ENCODE measurements at regions of chr2 and their contacts with region 1.

Region 1: GRCh38 chr2:164737612-164738081 is 104.0 kb downstream of the COBLL1 start:
- DNase-seq: peak; percentile 52
- ATAC-seq: peak; percentile 83
- H3K4me3 ChIP-seq: no peak overlapping the region
- H3K27ac ChIP-seq: no peak overlapping the region
- H3K4me1 ChIP-seq: peaks cover 2% of the 10 kb centered on the region
- H3K27me3 ChIP-seq: no peaks in the 10 kb centered on the region; the same call in none of the 2 replicates
- CTCF ChIP-seq: peak; percentile 75
- POLR2A ChIP-seq: no peak
- RAD21 ChIP-seq: peak; percentile 78

Region 2: DNA sequence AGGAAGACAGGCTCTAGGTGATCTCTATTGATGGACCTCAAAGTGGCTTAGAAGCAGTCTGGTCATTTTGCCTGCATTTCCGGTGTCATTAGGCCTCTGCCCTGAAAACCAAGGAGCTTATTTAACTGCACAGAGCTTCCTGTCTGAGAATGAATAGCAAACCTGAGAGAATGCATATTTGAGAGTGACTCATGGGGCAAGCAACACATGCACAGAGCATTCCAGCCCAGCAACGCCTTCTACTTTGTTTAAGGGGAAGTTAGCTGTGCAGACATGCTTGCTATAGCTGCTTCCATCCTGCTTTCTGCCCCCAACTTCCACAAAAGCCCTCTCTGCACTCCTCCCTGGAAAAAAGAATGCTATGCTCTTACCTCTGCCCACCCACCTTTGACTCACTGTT is 349.1 kb before region 1 on chr2:
- CTCF ChIA-PET with region 1: no interaction called
- POLR2A ChIA-PET with region 1: no interaction called
- dilution Hi-C with region 1: no loop called
- in situ Hi-C with region 1: no loop called
- intact Hi-C with region 1: no loop called
- DNase-seq: peak; percentile 63
- ATAC-seq: peak; percentile 81
- H3K4me3 ChIP-seq: no peak overlapping the region
- H3K27ac ChIP-seq: no peak overlapping the region
- H3K4me1 ChIP-seq: no peaks in the 10 kb centered on the region
- H3K27me3 ChIP-seq: no peaks in the 10 kb centered on the region
- CTCF ChIP-seq: no peak
- POLR2A ChIP-seq: no peak
- RAD21 ChIP-seq: no peak

Region 3: DNA sequence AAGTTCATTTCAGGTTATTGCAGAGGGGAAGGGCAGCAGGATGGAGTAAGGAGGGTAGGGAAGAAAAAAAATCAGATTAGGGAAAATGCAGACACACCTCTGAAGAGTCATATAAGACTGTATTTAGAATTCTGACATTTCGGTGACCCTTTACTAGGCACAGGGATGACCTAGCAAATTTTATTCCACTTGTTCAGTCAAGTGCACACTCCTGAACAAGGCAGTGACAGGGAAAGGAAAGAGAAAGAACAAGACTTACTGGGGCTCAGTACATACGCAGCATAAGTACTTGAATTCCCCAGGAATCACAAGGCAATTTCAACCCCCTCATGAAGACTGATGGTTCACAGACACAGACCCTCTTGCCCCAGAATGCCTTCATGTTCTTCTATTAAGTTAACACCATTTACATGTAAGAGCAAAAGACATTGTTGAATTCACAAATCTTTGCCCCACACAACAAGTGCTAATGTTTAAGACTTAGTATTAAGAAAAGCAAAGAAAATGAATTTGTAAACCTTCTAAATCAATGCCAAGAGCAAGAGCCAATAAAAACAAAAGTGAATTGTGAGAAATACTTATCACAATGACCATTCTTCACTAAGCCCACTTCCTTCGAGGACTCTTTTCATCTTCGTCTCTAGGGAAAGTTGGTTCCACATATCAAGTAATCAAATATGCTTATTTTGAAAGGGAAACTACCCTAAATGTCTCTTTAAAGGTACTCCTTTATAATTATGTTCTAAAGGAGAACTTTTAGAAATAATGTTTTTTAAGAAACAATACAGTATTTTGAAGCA is 57.0 kb after region 1 on chr2:
- CTCF ChIA-PET with region 1: no interaction called
- POLR2A ChIA-PET with region 1: no interaction called
- dilution Hi-C with region 1: no loop called
- in situ Hi-C with region 1: no loop called
- intact Hi-C with region 1: no loop called
- DNase-seq: no peak
- ATAC-seq: no peak
- H3K4me3 ChIP-seq: no peak overlapping the region
- H3K27ac ChIP-seq: no peak overlapping the region
- H3K4me1 ChIP-seq: no peaks in the 10 kb centered on the region
- H3K27me3 ChIP-seq: no peaks in the 10 kb centered on the region
- CTCF ChIP-seq: no peak
- POLR2A ChIP-seq: no peak
- RAD21 ChIP-seq: no peak

Region 4: DNA sequence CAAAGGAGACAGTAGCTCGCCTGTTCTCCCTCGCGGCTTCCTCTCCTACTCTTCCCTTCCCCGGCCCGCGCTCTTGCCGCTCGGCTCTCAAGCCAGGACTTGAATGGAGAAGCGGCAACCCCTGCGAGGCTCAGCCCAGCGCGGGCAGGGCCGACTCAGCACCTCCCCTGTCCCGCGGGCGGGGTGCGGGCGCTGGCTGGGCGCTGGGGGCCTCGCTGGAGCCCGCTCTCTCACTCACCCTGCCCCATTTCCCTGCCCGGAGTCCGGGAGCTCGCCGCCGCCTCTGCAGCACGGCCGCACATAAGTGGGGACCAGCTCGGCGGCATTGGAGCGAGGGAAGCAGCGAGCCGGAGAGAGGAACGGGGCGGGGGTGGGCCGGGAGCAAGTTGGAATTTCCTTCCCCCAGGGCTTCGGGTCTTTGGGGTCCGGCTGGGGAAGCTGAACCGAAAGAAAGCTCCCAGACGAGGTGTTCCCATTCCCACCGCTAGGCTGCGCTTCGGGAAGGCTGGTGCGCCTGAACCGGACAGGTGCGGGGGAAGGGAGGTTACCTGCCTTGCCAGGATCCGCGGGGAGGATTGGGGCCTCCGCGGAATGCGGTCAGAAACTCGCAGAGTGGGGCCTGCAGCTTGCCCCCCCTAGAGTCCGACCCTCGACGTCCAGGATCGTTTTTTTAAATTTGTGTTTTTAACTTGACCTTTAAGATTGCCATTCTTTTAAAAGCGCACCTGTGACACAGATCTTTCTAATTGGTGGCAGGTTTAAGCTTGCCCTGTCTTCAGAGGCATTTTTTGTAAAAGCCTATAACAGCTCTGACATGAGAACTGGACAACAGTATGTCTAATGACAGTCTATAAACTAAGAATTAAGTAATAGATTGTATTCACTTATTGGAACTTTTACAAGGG is 104.3 kb after region 1 on chr2 and contains the start of gene COBLL1:
- CTCF ChIA-PET with region 1: no interaction called
- POLR2A ChIA-PET with region 1: no interaction called
- dilution Hi-C with region 1: no loop called
- in situ Hi-C with region 1: no loop called
- intact Hi-C with region 1: loop called (anchors 5 kb)
- DNase-seq: peak; percentile 41
- ATAC-seq: peak; percentile 78
- H3K4me3 ChIP-seq: peak within 1 kb of the TSS; percentile 86
- H3K27ac ChIP-seq: peak within 1 kb of the TSS; percentile 10; the same call in 1 of the 2 replicates
- H3K4me1 ChIP-seq: no peaks in the 10 kb centered on the region
- H3K27me3 ChIP-seq: peaks cover 6% of the 10 kb centered on the region
- CTCF ChIP-seq: peak; percentile 57
- POLR2A ChIP-seq: no peak
- RAD21 ChIP-seq: peak; percentile 14; the same call in 1 of the 2 replicates
- total RNA-seq, gene COBLL1: 1.1 and 2.2 TPM in 2 replicates

Region 5: DNA sequence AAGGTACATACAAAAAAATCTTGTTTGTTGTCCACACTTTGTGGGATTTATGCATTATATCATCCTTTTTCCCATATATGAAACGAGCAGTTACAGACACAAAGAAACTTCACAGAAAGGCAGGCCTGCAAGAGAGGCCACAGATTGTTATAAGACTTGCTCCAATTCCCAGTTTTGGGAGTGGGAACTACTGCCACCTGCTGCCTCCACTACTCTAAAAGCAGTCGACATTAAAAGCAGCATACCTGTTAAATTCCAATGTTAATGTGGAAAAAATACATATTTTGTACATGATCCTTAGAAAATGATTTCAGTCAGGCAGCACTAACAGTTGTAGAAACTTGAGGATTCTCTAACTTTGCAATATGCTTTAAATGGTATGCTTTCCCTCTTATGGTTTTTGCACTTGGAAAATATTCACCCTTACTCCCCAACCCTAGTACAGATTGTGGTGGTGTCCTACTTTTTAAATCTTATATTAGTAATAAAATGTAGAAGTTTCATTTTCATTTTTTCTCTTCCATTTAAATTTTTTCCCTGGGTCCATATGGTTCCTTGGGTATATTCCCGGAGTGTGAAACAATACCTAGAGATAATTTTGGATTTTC is 179.8 kb after region 1 on chr2:
- CTCF ChIA-PET with region 1: interaction called, 6 read pairs
- POLR2A ChIA-PET with region 1: no interaction called
- dilution Hi-C with region 1: no loop called
- in situ Hi-C with region 1: loop called (anchors 25 kb)
- intact Hi-C with region 1: loop called (anchors 1 kb)
- DNase-seq: peak; percentile 36
- ATAC-seq: no peak
- H3K4me3 ChIP-seq: no peak overlapping the region
- H3K27ac ChIP-seq: no peak overlapping the region
- H3K4me1 ChIP-seq: peaks cover 5% of the 10 kb centered on the region
- H3K27me3 ChIP-seq: no peaks in the 10 kb centered on the region
- CTCF ChIP-seq: peak; percentile 48
- POLR2A ChIP-seq: no peak
- RAD21 ChIP-seq: peak; percentile 50

Region 6: DNA sequence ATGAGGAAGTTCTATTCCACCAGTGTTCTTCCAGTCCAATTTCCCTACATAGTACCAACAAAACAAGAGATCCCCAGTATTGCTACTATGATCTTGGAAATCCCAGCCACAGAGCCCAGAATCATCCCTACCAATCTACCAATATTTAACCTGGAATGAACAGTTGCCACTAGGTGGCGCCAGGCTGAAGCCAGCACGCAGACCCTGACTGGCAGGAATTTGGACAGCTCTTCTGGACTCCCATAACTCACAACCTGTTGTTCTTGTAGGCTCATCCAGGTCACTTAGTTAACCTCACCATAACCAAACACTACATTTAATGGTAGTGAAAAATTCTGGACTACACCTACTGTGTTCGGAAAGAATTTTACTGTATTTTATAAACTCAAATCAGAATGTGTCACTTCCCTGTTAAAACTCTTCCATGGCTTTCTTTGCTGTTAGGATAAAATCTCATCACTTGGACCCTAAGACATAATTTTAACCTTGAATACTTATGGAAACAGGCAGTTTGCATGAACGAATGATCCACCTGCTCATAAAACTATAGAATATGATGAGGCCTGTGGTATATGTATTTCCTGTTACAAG is 277.5 kb after region 1 on chr2:
- CTCF ChIA-PET with region 1: interaction called, 3 read pairs
- POLR2A ChIA-PET with region 1: no interaction called
- dilution Hi-C with region 1: no loop called
- in situ Hi-C with region 1: loop called (anchors 25 kb)
- intact Hi-C with region 1: loop called (anchors 2 kb)
- DNase-seq: peak; percentile 59
- ATAC-seq: peak; percentile 82
- H3K4me3 ChIP-seq: no peak overlapping the region
- H3K27ac ChIP-seq: no peak overlapping the region
- H3K4me1 ChIP-seq: no peaks in the 10 kb centered on the region
- H3K27me3 ChIP-seq: peaks cover 3% of the 10 kb centered on the region; the same call in 1 of the 2 replicates
- CTCF ChIP-seq: peak; percentile 82
- POLR2A ChIP-seq: no peak
- RAD21 ChIP-seq: peak; percentile 61

Region 7: DNA sequence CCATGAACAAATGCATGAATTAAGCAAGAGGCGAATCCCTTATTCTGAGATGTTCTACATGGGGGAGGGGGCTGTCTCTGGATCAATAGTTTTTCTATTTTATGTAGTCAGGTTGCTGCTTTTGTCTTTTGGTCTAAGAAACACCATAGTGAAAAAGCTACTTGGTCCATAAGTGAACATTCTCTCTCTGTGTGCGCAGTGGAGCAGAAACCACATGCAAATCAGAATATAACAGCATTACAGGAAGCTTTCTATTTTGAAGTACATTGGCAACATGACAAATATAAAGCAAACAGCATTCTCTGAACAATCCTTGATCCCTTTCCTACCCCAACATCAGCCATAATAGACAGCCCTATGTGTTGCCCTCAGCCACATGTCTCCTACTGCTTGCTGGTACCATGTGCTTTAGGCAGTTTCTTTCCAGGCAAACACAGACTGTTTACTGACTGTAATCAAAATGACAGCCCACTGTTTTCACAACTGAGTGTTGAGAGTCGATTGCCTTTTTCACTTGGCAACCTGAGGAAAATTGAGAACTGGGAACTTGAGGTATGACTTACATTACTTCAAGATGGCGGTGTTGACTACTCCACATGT is 455.6 kb after region 1 on chr2:
- CTCF ChIA-PET with region 1: no interaction called
- POLR2A ChIA-PET with region 1: no interaction called
- dilution Hi-C with region 1: no loop called
- in situ Hi-C with region 1: loop called (anchors 25 kb)
- intact Hi-C with region 1: no loop called
- DNase-seq: no peak
- ATAC-seq: no peak
- H3K4me3 ChIP-seq: no peak overlapping the region
- H3K27ac ChIP-seq: no peak overlapping the region
- H3K4me1 ChIP-seq: no peaks in the 10 kb centered on the region
- H3K27me3 ChIP-seq: no peaks in the 10 kb centered on the region
- CTCF ChIP-seq: no peak
- POLR2A ChIP-seq: no peak
- RAD21 ChIP-seq: no peak

Region 8: GRCh38 chr2:165203689-165204559 is 466.3 kb after region 1 on chr2 and contains the start of gene SCN3A:
- CTCF ChIA-PET with region 1: interaction called, 3 read pairs
- POLR2A ChIA-PET with region 1: no interaction called
- dilution Hi-C with region 1: no loop called
- in situ Hi-C with region 1: loop called (anchors 25 kb)
- intact Hi-C with region 1: loop called (anchors 1 kb)
- DNase-seq: peak; percentile 45
- ATAC-seq: peak; percentile 37; the same call in 1 of the 2 replicates
- H3K4me3 ChIP-seq: no peak within 1 kb of the TSS
- H3K27ac ChIP-seq: no peak within 1 kb of the TSS
- H3K4me1 ChIP-seq: no peaks in the 10 kb centered on the region
- H3K27me3 ChIP-seq: no peaks in the 10 kb centered on the region; the same call in 1 of the 2 replicates
- CTCF ChIP-seq: peak; percentile 82
- POLR2A ChIP-seq: no peak
- RAD21 ChIP-seq: peak; percentile 75
- total RNA-seq, gene SCN3A: 0.90 and 1.4 TPM in 2 replicates

Region 9: DNA sequence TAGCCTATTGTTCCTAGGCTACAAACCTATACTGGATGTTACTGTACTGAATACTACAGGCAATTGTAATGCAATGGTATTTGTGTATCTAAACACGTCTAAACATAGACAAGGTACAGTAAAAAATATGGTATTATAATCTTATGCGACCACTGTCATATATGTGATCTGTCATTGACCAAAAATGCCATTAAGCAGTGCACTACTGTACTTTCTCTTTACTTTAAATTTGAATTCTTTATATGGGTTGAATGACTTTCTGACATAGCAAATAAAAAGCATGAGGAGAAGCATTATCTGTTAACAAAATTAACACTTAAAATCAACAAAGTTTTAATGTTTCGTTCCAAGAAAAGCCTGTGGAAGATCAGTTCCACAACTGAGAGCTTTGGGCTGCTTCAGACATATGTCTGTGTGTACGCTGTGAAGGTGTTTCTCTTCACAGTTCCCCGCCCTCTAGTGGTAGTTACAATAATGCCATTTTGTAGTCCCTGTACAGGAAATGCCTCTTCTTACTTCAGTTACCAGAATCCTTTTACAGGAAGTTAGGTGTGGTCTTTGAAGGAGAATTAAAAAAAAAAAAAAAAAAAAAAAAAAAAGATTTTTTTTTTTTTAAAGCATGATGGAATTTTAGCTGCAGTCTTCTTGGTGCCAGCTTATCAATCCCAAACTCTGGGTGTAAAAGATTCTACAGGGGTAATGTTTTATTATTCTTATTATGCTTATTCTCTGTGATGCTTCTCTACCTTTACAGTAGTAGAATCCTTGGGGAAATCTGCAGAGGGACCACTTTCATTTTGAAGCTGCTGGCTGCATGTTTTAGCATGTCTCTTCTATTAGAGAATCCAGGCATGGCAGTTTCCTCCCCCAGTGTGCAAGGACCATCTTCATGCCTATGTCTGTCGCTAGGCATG is 556.0 kb after region 1 on chr2:
- CTCF ChIA-PET with region 1: no interaction called
- POLR2A ChIA-PET with region 1: no interaction called
- dilution Hi-C with region 1: no loop called
- in situ Hi-C with region 1: no loop called
- intact Hi-C with region 1: loop called (anchors 1 kb)
- DNase-seq: peak; percentile 87
- ATAC-seq: peak; percentile 100
- H3K4me3 ChIP-seq: peak overlapping the region; percentile 40
- H3K27ac ChIP-seq: no peak overlapping the region
- H3K4me1 ChIP-seq: no peaks in the 10 kb centered on the region
- H3K27me3 ChIP-seq: no peaks in the 10 kb centered on the region
- CTCF ChIP-seq: peak; percentile 82
- POLR2A ChIP-seq: no peak
- RAD21 ChIP-seq: peak; percentile 47